Right ventricle myocardium inferior (tissue), 1 donor: ENCODE measurements at regions of chr14 and their contacts with region 1.

Region 1: GRCh38 chr14:44897045-44897844 is 64.5 kb downstream of the KLHL28 start:
- DNase-seq: peak; percentile 99
- ATAC-seq: peak; percentile 99

Region 2: DNA sequence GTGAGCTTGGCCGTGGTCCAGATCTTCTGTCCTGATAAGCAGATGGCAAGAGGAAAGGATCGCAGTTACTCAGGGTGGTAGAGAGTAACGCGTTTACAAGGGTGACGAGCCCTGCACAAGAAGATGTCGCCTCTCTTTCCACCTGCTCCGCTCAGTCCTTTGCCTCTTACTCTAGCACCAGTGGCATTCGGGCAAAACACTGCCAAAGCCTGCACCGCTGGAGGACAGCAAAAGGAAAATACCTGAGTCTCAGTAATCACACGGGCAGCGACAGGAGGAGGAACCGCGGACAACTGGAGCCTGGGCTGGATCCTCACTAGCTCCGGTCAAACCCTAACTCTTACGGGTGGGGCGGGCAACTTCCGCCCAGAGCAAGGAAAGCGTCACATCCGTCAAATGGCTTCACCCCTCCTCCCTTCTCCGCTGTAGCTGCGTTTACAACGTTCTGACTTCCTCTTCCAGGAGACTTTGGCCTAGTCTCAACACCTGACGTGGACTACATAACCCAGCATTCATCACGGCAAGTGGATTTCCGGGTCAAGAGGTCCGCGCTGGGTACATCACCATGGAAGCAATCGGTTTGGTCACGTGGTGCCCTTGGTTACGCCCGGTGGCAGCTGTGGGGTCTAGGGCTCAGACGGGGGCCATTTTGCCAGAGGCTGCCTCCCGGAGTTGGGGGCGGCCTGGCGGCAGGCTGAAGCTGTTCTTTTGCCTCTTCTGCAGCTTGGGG is 64.5 kb after region 1 on chr14 and contains the starts of genes KLHL28 and TOGARAM1:
- intact Hi-C with region 1: loop called (anchors 2 kb)
- DNase-seq: peak; percentile 97
- ATAC-seq: peak; percentile 98
- total RNA-seq, gene KLHL28: 13.0 TPM
- total RNA-seq, gene TOGARAM1: 20.5 TPM

Region 3: GRCh38 chr14:45083971-45084722 is 186.9 kb after region 1 on chr14 and contains the start of gene PRPF39:
- intact Hi-C with region 1: loop called (anchors 5 kb)
- DNase-seq: peak; percentile 97
- ATAC-seq: peak; percentile 100
- total RNA-seq, gene PRPF39: 10.5 TPM

Region 4: GRCh38 chr14:45253068-45253753 is 356.0 kb after region 1 on chr14 and contains the start of gene MIS18BP1:
- intact Hi-C with region 1: loop called (anchors 5 kb)
- DNase-seq: peak; percentile 98
- ATAC-seq: peak; percentile 97
- total RNA-seq, gene MIS18BP1: 7.6 TPM

Region 5: DNA sequence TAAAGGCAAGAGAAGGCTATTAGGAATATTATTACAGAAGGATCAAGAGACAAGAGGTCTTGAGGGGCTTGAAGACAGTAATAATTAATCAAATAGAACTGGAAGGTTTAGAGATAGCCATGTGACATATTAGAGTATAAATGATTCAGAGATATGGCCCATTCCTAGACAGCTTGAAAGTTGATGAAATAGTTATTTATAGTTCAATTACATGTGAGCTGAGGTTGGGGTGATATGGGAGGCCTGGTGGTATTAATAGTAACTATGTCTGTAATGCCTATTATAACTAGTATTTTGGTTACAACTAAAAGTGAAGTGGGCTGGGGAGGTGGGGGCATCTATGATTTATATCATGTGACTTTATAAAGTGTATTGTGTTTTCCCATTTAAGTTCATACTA is 369.8 kb after region 1 on chr14:
- intact Hi-C with region 1: loop called (anchors 5 kb)
- DNase-seq: no peak
- ATAC-seq: peak; percentile 89